ENCODE measurements at regions of chr21 and their contacts with region 1.

Region 1: GRCh38 chr21:38170280-38170679 is 86.5 kb upstream of the KCNJ15 start:
- DNase-seq: peak in 1 of 2 donors; percentile 25
- ATAC-seq: peak in 5 of 8 donors; percentile 31 to 52 (median 46)
- H3K4me3 ChIP-seq: no peak overlapping the region
- H3K27ac ChIP-seq: peak overlapping the region in 1 of 10 donors; percentile 54
- H3K4me1 ChIP-seq: peaks cover 0 to 29% (median 17%) of the 10 kb centered on the region in 9 donors
- H3K27me3 ChIP-seq: peaks cover 0 to 3% (median 0%) of the 10 kb centered on the region in 7 donors
- CTCF ChIP-seq: peak in 7 of 9 donors; percentile 34 to 59 (median 46)

Region 2: GRCh38 chr21:38211321-38211720 is 41.0 kb after region 1 on chr21:
- intact Hi-C with region 1: loop called in 1 of 10 experiments (anchors 5 kb)
- DNase-seq: no peak
- ATAC-seq: no peak
- H3K4me3 ChIP-seq: no peak overlapping the region
- H3K27ac ChIP-seq: no peak overlapping the region
- H3K4me1 ChIP-seq: no peaks in the 10 kb centered on the region
- H3K27me3 ChIP-seq: peaks cover 0 to 26% (median 9%) of the 10 kb centered on the region in 7 donors
- CTCF ChIP-seq: no peak

Region 3: GRCh38 chr21:39153373-39153772 is 983.1 kb after region 1 on chr21:
- intact Hi-C with region 1: loop called in 1 of 10 experiments (anchors 10 kb)
- DNase-seq: no peak
- ATAC-seq: peak in 4 of 8 donors; percentile 38 to 68 (median 46)
- H3K4me3 ChIP-seq: no peak overlapping the region
- H3K27ac ChIP-seq: no peak overlapping the region
- H3K4me1 ChIP-seq: no peaks in the 10 kb centered on the region
- H3K27me3 ChIP-seq: no peaks in the 10 kb centered on the region
- CTCF ChIP-seq: peak in 7 of 9 donors; percentile 29 to 48 (median 35)